ENCODE measurements at regions of chr2 and their contacts with region 1.

Region 1: GRCh38 chr2:182015334-182016109 is 29.9 kb downstream of the PPP1R1C start:
- DNase-seq: no peak
- H3K4me3 ChIP-seq: no peak overlapping the region
- H3K27ac ChIP-seq: no peak overlapping the region
- H3K4me1 ChIP-seq: no peaks in the 10 kb centered on the region
- H3K27me3 ChIP-seq: no peaks in the 10 kb centered on the region
- CTCF ChIP-seq: no peak
- EP300 ChIP-seq: no peak
- POLR2A ChIP-seq: no peak

Region 2: DNA sequence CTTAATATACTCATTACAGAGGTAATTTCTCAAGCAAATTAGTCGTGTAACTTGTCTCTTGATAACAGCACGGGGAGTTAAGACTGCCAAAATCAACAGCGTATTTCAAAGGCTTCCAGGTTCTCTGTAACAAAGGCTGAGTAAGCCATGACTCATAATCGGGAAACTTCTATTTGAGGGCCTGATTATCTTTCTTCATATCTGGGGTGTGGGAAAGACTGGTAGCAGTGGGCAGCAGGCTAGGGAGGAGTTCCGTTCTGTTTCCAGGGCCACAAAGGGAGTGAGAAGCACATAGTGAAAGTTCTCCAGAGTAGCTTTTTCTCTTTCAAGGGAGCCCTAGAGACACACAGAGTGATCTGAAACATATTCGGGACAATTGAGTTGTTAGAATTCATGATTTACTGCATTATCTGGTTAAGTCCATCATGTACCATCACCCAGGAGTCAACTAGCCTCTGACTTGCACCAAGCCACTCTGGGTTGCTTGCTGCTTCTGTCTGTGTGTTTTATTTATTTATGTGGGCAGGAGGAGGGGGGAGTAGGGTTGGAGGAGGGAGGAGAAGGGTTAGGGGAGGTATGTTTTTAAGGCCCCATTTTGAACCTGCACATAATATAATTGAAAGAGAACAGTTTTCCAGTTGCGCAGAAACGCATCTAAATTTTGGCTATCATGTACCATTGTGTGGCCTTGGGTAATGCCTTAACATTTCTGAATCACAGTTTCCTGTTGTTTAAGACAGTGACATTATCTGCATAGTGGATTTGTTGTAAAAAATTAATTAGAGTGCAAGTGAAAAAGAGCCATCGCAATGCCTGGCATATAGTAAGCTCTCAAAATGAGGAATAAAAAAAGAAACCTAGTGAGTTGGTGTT is 204.5 kb before region 1 on chr2:
- in situ Hi-C with region 1: no loop called
- intact Hi-C with region 1: no loop called
- DNase-seq: peak; percentile 36
- H3K4me3 ChIP-seq: peak overlapping the region in 1 of 4 donors; percentile 0
- H3K27ac ChIP-seq: peak overlapping the region; percentile 63 to 83 (median 72)
- H3K4me1 ChIP-seq: peaks cover 10 to 49% (median 24%) of the 10 kb centered on the region in 4 donors
- H3K27me3 ChIP-seq: no peaks in the 10 kb centered on the region
- CTCF ChIP-seq: no peak
- EP300 ChIP-seq: no peak
- POLR2A ChIP-seq: no peak

Region 3: DNA sequence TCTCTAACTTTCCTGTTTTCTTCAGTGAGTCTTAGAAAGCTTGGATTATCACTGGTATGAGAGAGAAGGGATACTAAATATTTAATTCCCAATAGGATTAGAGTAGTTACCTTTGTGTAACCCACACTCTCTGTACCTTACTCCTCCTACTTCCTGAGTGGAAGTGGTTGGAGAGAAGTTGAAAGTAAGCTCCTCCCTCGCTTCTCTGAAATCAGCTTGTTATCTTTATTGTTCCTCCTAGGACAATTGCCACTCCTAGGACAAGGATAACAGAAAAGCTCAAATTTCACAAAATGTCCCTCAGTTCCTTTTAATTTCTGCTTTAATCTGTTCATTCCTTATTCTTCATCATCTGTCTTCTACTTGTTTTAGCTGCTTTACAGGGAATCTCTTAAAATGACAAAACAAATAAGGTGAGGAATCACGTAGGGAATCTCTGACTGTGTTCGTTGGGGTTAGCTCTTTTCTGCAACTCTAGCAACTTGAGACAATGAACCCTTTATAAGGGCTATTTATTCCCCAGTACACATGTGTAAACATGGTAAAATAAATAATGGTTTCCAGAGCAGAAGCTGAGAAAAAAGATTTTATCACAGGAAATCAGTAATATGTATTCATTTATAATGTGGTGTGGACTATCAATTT is 115.4 kb before region 1 on chr2:
- in situ Hi-C with region 1: no loop called
- intact Hi-C with region 1: no loop called
- DNase-seq: no peak
- H3K4me3 ChIP-seq: no peak overlapping the region
- H3K27ac ChIP-seq: peak overlapping the region; percentile 19 to 64 (median 36)
- H3K4me1 ChIP-seq: peaks cover 0 to 98% (median 50%) of the 10 kb centered on the region in 4 donors
- H3K27me3 ChIP-seq: no peaks in the 10 kb centered on the region
- CTCF ChIP-seq: no peak
- EP300 ChIP-seq: no peak
- POLR2A ChIP-seq: no peak

Region 4: GRCh38 chr2:181995289-181995688 is 20.2 kb before region 1 on chr2:
- in situ Hi-C with region 1: no loop called
- intact Hi-C with region 1: loop called (anchors 1 kb)
- DNase-seq: no peak
- H3K4me3 ChIP-seq: no peak overlapping the region
- H3K27ac ChIP-seq: no peak overlapping the region
- H3K4me1 ChIP-seq: no peaks in the 10 kb centered on the region
- H3K27me3 ChIP-seq: no peaks in the 10 kb centered on the region
- CTCF ChIP-seq: no peak
- EP300 ChIP-seq: no peak
- POLR2A ChIP-seq: no peak